Posterior cingulate gyrus (tissue), 11 donors: ENCODE measurements at regions of chr12 and their contacts with region 1.

Region 1: GRCh38 chr12:15584366-15585041 is 204.7 kb downstream of the EPS8 start:
- DNase-seq: peak in 1 of 10 donors; percentile 36

Region 2: DNA sequence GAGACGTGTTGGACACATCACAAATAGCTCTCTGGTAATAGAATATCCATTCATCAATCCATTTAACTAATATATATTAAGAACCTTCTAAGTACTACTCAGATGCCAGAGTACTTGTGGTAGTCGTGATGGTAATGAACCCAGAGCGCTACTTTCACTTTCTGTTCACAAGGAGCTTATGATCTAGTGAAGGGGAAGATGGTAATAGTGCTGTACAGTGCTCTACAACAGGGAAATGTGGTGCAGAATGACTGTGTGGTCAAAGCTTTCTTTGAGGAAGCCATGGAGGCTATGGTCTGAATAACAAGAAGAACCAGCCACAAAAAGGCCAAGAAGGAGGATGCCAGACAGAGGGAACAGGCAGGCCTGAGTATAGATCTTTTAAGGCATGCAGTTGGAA is 50.2 kb before region 1 on chr12:
- intact Hi-C with region 1: loop called (anchors 2 kb)
- DNase-seq: no peak

Region 3: DNA sequence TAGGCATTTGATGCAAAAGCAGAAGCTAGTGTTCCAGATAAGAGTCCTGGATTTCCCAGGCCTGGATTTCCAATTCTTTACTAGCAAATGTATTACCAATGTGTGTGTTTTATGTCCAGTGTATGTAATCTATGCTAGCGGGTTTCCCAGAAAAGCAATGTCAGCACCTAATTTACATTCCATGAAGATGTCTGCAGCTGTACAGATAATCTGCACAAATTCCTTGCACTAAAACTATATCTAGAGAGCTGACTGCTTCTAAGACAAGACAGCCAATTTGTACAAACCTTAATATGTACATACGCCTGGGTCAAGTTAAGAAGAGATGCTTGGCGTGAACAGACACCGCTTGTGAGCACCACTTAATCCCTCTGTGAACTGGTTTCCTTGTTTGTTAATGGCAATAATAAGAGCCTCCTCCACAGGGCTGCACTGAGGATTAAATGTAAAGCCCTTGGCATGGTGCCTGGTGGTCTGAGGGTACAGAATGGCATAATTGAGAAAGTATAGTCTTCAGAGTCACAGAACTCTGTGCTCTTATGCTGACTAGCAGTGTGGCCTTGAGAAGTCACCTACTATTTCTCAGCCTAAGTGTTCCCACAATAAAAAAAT is 19.1 kb after region 1 on chr12:
- intact Hi-C with region 1: no loop called
- DNase-seq: no peak